Right lobe of liver (tissue), 6 donors: ENCODE measurements at regions of chr1 and their contacts with region 1.

Region 1: GRCh38 chr1:110449661-110450651 is 993 bp upstream of the PROK1 start:
- DNase-seq: peak; percentile 55 to 80 (median 65)
- ATAC-seq: peak; percentile 92 to 95 (median 94)
- H3K4me3 ChIP-seq: no peak overlapping the region
- H3K27ac ChIP-seq: peak overlapping the region in 2 of 3 donors; percentile 12 to 56
- H3K4me1 ChIP-seq: peaks cover 0 to 23% (median 6%) of the 10 kb centered on the region in 4 donors
- H3K27me3 ChIP-seq: no peaks in the 10 kb centered on the region
- CTCF ChIP-seq: no peak
- POLR2A ChIP-seq: no peak

Region 2: GRCh38 chr1:110390692-110391245 is 59.2 kb before region 1 on chr1 and contains the start of gene SLC16A4:
- intact Hi-C with region 1: no loop called
- DNase-seq: no peak
- ATAC-seq: peak; percentile 73 to 91 (median 80)
- H3K4me3 ChIP-seq: peak within 1 kb of the TSS in 2 of 3 donors; percentile 26 to 29
- H3K27ac ChIP-seq: peak within 1 kb of the TSS in 1 of 3 donors; percentile 22
- H3K4me1 ChIP-seq: peaks cover 0 to 13% (median 0%) of the 10 kb centered on the region in 4 donors
- H3K27me3 ChIP-seq: no peaks in the 10 kb centered on the region
- CTCF ChIP-seq: no peak
- POLR2A ChIP-seq: no peak
- total RNA-seq, gene SLC16A4: 0.49 to 4.0 (median 3.4) TPM

Region 3: DNA sequence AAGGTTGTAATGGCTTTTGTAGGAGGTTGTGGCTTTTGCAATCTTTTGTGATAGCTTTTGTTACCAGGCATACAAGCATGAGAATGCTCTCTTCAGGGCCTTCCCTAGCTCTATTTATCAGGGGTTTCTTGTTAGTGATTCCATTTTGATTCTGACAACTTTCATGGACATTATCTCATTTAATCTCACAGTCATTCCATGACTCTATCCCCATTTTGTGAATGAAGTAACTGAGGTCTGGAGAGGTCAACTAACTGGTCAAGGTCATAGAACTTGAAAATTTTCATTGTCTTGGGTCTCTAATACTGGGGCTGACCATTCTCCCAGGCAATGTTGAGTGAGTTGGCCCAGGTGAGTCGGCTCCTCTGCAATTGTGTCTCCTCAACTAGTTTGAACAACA is 31.2 kb before region 1 on chr1:
- intact Hi-C with region 1: loop called in 1 of 2 experiments (anchors 5 kb)
- DNase-seq: no peak
- ATAC-seq: no peak
- H3K4me3 ChIP-seq: no peak overlapping the region
- H3K27ac ChIP-seq: no peak overlapping the region
- H3K4me1 ChIP-seq: peaks cover 0 to 9% (median 0%) of the 10 kb centered on the region in 4 donors
- H3K27me3 ChIP-seq: no peaks in the 10 kb centered on the region
- CTCF ChIP-seq: no peak
- POLR2A ChIP-seq: no peak

Region 4: GRCh38 chr1:110581682-110582145 is 131.8 kb after region 1 on chr1:
- intact Hi-C with region 1: no loop called
- DNase-seq: no peak
- ATAC-seq: no peak
- H3K4me3 ChIP-seq: no peak overlapping the region
- H3K27ac ChIP-seq: no peak overlapping the region
- H3K4me1 ChIP-seq: no peaks in the 10 kb centered on the region
- H3K27me3 ChIP-seq: no peaks in the 10 kb centered on the region
- CTCF ChIP-seq: no peak
- POLR2A ChIP-seq: no peak